ENCODE measurements at regions of chr10 and their contacts with region 1.

Region 1: GRCh38 chr10:100346765-100347567 is at the start of gene SCD:
- DNase-seq: peak; percentile 93 to 99 (median 95)

Region 2: DNA sequence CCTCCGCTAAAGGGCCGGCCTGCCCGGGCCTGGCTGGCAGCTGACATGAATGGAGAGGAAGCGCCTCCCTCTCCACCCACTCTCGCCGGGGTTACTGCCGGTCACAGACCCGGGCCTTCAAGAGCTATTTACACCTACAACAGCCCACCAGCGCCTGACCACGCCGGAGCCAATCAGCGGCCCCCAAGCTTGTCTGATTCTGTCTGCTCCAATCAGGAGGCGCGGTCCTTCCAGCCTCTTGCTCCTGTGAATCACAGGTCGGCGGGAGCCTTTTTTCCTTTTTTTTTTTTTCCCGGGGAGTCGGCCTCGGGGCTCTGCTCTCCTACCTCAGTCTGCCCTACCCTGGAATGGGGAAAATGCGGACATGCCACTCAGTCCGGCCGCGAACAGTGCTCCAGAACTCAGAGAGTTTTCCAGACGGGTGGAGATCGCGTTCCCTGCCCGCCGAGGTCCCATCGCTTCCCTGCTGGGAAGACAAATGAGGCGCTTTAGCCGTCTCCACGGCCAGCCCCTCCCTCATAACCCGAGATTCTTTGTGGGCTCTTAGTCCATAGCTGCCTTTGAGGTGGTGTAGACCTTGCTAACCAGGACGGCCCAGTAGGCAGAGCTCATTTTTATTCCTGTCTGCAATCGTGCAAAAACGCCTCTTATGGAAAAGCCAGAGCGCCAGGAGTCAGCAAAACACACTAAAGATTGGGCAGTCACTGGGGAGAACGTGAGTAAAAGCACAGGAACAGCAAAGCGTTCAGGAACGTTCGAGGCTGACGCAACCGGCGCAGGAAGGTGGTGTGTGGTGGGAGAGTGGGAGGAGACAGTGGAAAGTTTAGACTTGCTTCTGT is 26.6 kb after region 1 on chr10:
- intact Hi-C with region 1: loop called (anchors 2 kb)
- DNase-seq: peak; percentile 96 to 100 (median 98)

Region 3: DNA sequence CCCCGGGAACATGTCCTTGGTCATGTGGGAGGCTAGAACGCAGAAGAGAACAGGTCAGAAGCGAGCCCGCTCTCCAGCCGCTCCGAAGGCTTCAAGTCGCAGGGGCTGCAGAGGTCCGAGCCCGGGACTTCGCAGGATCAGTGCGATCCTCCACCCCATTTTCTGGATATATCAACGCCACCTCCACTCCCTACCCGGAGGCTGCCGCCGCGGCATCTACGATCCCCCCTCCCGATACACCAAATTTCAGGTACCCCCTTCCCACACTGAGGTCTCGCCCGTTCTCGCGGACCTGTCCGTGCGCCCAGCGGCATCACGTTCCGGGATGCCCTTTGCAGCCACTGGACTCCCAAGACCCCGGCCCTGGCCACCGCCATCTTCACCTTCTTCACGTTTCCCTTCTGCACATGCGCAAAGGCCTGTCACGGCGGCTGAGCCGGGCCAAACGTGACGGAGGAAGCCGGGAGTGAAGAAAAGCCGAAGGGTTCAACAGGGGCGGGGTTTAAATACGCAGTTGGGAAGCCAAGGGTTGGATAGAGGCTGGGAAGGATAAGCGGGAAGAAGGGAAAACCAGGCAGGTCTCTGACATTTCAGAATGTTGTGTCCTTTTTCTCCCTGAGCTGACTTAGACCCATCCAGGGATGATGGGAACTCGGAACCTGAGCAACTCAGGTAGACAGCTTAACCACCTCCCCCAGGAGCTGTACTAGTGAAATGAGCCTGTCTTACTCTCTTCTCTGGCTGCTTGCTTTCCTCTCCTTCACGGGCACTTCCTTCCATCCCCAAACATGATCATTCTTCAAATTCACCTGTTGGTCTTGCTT is 182.7 kb after region 1 on chr10 and contains the start of gene NDUFB8:
- intact Hi-C with region 1: loop called (anchors 10 kb)
- DNase-seq: peak; percentile 86 to 98 (median 91)

Measured in posterior cingulate gyrus (tissue), 11 donors.